ENCODE measurements at regions of chr12 and their contacts with region 1.

Region 1: GRCh38 chr12:118264068-118264467 is 108.6 kb downstream of the TAOK3 start:
- DNase-seq: peak; percentile 8
- ATAC-seq: no peak
- H3K4me3 ChIP-seq: no peak overlapping the region
- H3K27ac ChIP-seq: no peak overlapping the region
- H3K4me1 ChIP-seq: peaks cover 2% of the 10 kb centered on the region
- H3K27me3 ChIP-seq: no peaks in the 10 kb centered on the region
- CTCF ChIP-seq: no peak
- POLR2A ChIP-seq: no peak
- RAD21 ChIP-seq: no peak

Region 2: GRCh38 chr12:117890137-117890536 is 373.9 kb before region 1 on chr12:
- CTCF ChIA-PET with region 1: no interaction called
- POLR2A ChIA-PET with region 1: no interaction called
- dilution Hi-C with region 1: no loop called
- in situ Hi-C with region 1: no loop called
- intact Hi-C with region 1: no loop called
- DNase-seq: no peak
- ATAC-seq: no peak
- H3K4me3 ChIP-seq: no peak overlapping the region
- H3K27ac ChIP-seq: no peak overlapping the region
- H3K4me1 ChIP-seq: no peaks in the 10 kb centered on the region
- H3K27me3 ChIP-seq: no peaks in the 10 kb centered on the region
- CTCF ChIP-seq: no peak
- POLR2A ChIP-seq: no peak
- RAD21 ChIP-seq: no peak

Region 3: DNA sequence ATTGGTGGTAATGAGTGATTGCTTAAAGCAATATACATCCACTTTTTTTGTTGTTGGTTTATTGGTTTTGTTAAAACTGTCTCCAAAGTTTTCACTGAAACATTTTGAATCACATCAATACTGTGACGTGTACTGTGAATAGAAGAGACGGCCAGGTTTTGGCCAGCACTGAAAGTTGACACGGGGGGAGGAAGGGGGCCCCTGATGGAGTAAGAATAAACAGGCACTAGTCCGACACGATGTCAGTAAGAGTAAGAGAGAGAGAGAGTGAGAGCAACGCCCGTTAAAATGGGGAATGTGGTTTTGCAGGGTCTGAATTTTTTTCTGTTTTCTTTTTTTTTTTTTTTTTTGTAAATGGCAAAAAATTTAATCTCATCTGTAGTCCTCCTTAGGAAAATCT is 113.4 kb before region 1 on chr12:
- CTCF ChIA-PET with region 1: no interaction called
- POLR2A ChIA-PET with region 1: no interaction called
- dilution Hi-C with region 1: no loop called
- in situ Hi-C with region 1: no loop called
- intact Hi-C with region 1: no loop called
- DNase-seq: no peak
- ATAC-seq: no peak
- H3K4me3 ChIP-seq: no peak overlapping the region
- H3K27ac ChIP-seq: no peak overlapping the region
- H3K4me1 ChIP-seq: no peaks in the 10 kb centered on the region
- H3K27me3 ChIP-seq: no peaks in the 10 kb centered on the region
- CTCF ChIP-seq: no peak
- POLR2A ChIP-seq: no peak
- RAD21 ChIP-seq: no peak

Region 4: GRCh38 chr12:118237052-118237665 is 26.9 kb before region 1 on chr12:
- CTCF ChIA-PET with region 1: interaction called, 4 read pairs
- POLR2A ChIA-PET with region 1: no interaction called
- dilution Hi-C with region 1: no loop called
- in situ Hi-C with region 1: no loop called
- intact Hi-C with region 1: loop called (anchors 1 kb)
- DNase-seq: no peak
- ATAC-seq: no peak
- H3K4me3 ChIP-seq: no peak overlapping the region
- H3K27ac ChIP-seq: no peak overlapping the region
- H3K4me1 ChIP-seq: no peaks in the 10 kb centered on the region
- H3K27me3 ChIP-seq: no peaks in the 10 kb centered on the region
- CTCF ChIP-seq: no peak
- POLR2A ChIP-seq: no peak
- RAD21 ChIP-seq: no peak

Region 5: GRCh38 chr12:118312578-118312977 is 48.5 kb after region 1 on chr12:
- CTCF ChIA-PET with region 1: no interaction called
- POLR2A ChIA-PET with region 1: no interaction called
- dilution Hi-C with region 1: no loop called
- in situ Hi-C with region 1: no loop called
- intact Hi-C with region 1: no loop called
- DNase-seq: no peak
- ATAC-seq: no peak
- H3K4me3 ChIP-seq: no peak overlapping the region
- H3K27ac ChIP-seq: no peak overlapping the region
- H3K4me1 ChIP-seq: peaks cover 6% of the 10 kb centered on the region
- H3K27me3 ChIP-seq: no peaks in the 10 kb centered on the region
- CTCF ChIP-seq: no peak
- POLR2A ChIP-seq: no peak
- RAD21 ChIP-seq: no peak

Measured in IMR-90 (cell line).